Activated CD4-positive, alpha-beta T cell treated with anti-CD3 and anti-CD28 coated beads, Interleukin-2, amount 10 ng/mL, durations not matched to agents 7 days and 5 days (primary cell): ENCODE measurements at regions of chr5 and their contacts with region 1.

Region 1: DNA sequence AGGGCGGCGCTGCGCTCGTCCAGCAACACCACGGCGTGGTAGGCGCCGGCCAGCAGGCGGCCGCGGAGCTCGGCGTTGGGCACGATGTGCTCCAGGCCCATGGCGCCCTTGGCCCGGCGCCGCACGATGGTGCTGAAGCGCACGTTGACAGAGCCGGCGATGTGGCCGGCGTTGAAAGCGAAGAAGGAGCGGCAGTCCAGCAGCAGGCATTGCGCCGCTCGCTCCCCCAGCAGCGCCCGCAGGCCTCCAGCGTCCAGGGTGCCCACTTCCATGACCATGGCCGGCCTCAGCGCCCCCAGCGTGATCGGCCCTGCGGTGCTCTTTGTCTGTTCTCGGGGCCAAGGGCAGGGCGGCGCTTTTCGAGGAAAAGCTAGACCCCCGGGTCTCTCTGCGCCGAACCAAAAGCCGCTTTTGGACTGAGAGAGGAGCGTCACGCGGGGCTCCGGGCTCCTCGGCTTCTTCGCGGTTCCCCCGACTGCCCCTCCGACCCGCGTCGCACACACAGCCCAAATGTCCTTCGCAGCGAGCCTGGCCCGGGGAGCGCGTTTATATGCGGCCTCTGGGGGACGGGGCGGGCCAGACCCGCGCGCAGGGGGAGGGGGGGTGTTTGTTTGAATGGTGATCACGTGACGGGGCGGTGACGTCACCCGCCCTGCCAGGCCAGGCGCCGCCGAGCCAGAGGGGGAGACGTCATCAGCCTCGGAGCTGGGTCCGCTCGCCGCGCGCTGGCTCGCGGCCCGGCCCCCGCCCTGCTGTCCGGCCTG is at the start of gene DUSP1:
- DNase-seq: peak; percentile 97
- H3K4me3 Mint-ChIP-seq: peak within 1 kb of the TSS; percentile 87
- H3K27ac Mint-ChIP-seq: peak within 1 kb of the TSS; percentile 99
- H3K4me1 Mint-ChIP-seq: peaks cover 52% of the 10 kb centered on the region
- H3K27me3 Mint-ChIP-seq: no peaks in the 10 kb centered on the region
- total RNA-seq, gene DUSP1: 11.3 to 14.9 TPM

Region 2: GRCh38 chr5:172481858-172482714 is 288.8 kb before region 1 on chr5:
- CTCF ChIA-PET with region 1: no interaction called
- POLR2A ChIA-PET with region 1: no interaction called
- DNase-seq: no peak
- H3K4me3 Mint-ChIP-seq: no peak overlapping the region
- H3K27ac Mint-ChIP-seq: no peak overlapping the region
- H3K4me1 Mint-ChIP-seq: no peaks in the 10 kb centered on the region
- H3K27me3 Mint-ChIP-seq: no peaks in the 10 kb centered on the region

Region 3: GRCh38 chr5:172740428-172741201 is 30.2 kb before region 1 on chr5:
- CTCF ChIA-PET with region 1: no interaction called
- POLR2A ChIA-PET with region 1: no interaction called
- DNase-seq: no peak
- H3K4me3 Mint-ChIP-seq: no peak overlapping the region
- H3K27ac Mint-ChIP-seq: no peak overlapping the region
- H3K4me1 Mint-ChIP-seq: no peaks in the 10 kb centered on the region
- H3K27me3 Mint-ChIP-seq: no peaks in the 10 kb centered on the region

Region 4: DNA sequence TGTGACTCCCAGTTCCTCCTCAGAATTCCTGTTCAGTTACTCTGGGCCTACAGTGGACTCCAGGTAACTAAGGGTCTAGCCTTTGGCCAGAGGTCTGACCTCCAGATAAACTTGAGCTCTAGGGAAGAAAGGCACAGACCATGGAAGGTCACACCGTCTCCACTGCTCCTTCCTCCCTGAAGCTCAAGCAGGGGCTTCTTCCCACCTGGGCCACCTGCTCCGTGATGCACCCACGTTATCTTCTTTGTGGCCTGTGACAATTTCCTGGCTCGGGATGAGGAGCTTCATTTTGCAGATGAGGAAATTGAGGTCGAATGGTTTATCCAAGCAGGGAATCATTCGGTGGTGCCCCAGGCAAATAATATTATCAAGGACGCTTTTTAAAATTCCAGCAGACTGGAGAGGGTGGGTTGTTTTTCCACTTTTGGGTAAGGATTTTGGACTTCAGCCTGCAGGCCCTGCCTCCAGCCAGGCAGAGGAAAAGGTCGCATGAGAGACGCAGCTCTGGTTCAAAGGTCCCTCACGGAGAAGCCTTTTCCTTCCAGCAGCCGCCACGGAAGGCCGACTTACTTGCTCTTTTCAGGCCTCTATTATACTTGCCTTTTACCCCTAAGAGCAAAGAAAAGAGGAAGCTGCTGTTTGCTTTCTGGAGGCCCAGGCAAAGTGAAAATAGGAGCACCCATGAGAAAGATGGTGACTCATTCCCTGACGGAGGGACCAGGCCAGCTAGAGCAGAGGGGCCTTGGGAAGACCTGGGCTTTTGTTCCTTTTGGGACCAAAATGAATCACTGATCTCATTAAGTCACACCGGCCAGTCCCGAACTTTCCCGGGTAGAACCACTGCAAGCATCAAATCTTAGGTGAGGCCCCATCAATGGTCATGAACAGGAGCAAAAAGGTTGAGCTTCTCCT is 23.0 kb after region 1 on chr5:
- CTCF ChIA-PET with region 1: interaction called, 26 read pairs
- POLR2A ChIA-PET with region 1: no interaction called
- DNase-seq: no peak
- H3K4me3 Mint-ChIP-seq: no peak overlapping the region
- H3K27ac Mint-ChIP-seq: no peak overlapping the region
- H3K4me1 Mint-ChIP-seq: peaks cover 12% of the 10 kb centered on the region
- H3K27me3 Mint-ChIP-seq: no peaks in the 10 kb centered on the region

Region 5: DNA sequence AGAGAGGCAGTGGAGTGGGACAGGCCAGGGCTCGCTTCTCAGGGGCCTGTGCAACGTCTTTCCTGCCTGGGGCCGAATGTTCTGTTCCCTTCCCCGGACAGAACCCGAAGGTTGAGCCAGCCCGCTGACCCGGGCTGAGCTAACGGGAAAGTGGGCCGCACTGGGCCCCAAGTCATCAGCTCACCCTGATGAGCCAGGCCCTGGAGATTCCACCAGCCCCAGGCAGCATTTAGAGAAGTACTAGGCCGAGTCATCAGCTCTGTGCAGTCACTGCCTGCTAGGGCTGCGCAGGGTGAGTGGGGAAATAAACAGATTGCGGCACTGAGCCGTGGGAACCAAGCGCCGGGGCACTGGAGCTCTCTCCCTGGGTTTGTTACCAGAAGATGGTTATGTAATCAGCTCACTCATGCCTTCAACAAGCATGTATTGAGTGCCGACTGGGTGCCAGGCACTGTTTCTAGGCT is 29.3 kb after region 1 on chr5:
- CTCF ChIA-PET with region 1: interaction called, 26 read pairs
- POLR2A ChIA-PET with region 1: no interaction called
- DNase-seq: no peak
- H3K4me3 Mint-ChIP-seq: no peak overlapping the region
- H3K27ac Mint-ChIP-seq: no peak overlapping the region
- H3K4me1 Mint-ChIP-seq: peaks cover 10% of the 10 kb centered on the region
- H3K27me3 Mint-ChIP-seq: no peaks in the 10 kb centered on the region

Region 6: GRCh38 chr5:172833686-172834414 is 63.0 kb after region 1 on chr5 and contains the start of gene ERGIC1:
- CTCF ChIA-PET with region 1: interaction called, 16 read pairs
- POLR2A ChIA-PET with region 1: interaction called, 3 read pairs
- DNase-seq: peak; percentile 74
- H3K4me3 Mint-ChIP-seq: peak within 1 kb of the TSS; percentile 83
- H3K27ac Mint-ChIP-seq: peak within 1 kb of the TSS; percentile 86
- H3K4me1 Mint-ChIP-seq: peaks cover 38% of the 10 kb centered on the region
- H3K27me3 Mint-ChIP-seq: no peaks in the 10 kb centered on the region
- total RNA-seq, gene ERGIC1: 43.4 to 45.0 TPM

Region 7: GRCh38 chr5:172868924-172869591 is 98.2 kb after region 1 on chr5:
- CTCF ChIA-PET with region 1: no interaction called
- POLR2A ChIA-PET with region 1: no interaction called
- DNase-seq: no peak
- H3K4me3 Mint-ChIP-seq: no peak overlapping the region
- H3K27ac Mint-ChIP-seq: no peak overlapping the region
- H3K4me1 Mint-ChIP-seq: peaks cover 9% of the 10 kb centered on the region
- H3K27me3 Mint-ChIP-seq: no peaks in the 10 kb centered on the region